ENCODE measurements at regions of chr11 and their contacts with region 1.

Region 1: DNA sequence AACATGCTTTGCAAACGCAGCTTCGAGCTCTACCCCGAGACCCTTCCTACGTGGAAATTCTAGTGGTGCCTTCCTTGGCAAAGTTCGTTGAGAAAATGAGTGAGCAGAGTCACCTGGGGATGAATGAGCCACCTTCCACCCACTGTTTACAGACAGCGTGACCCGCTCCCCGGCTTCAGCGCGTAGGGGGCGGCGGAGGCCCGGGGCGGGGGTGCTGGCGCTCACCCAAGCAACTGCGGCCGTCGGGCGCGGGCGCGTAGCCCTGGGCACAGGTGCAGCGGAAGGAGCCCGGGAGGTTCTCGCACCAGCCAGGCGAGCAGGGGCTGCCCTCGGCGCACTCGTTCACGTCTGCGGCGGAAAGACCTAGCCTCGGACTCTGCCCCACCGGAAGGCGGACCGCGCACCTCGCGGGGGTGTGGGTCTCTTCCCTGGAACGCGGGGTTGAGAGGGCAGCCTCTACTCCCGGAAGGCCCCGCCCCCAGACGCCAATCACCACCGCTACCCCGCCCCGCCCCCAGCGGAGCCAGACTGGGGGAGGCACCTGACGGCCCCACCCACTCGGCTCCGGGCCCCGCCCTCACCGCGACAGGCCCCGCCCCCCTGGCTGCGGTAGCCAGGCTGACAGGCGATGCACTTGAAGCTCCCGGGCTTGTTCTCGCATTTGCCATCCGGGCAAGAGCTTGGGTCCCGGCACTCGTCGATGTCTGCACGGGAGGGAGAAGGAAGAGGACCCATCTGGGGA is 11.8 kb downstream of the LTBP3 start:
- DNase-seq: peak; percentile 95 to 100 (median 98)
- ATAC-seq: peak; percentile 96
- H3K4me3 ChIP-seq: peak overlapping the region; percentile 14
- H3K4me3 Mint-ChIP-seq: peak overlapping the region; percentile 39 to 86 (median 84)
- H3K27ac ChIP-seq: peak overlapping the region; percentile 75
- H3K27ac Mint-ChIP-seq: peak overlapping the region; percentile 86 to 98 (median 88)
- H3K4me1 ChIP-seq: peaks cover 27 to 41% of the 10 kb centered on the region in 2 donors
- H3K4me1 Mint-ChIP-seq: peaks cover 40 to 73% (median 54%) of the 10 kb centered on the region in 7 donors
- H3K27me3 ChIP-seq: no peaks in the 10 kb centered on the region
- H3K27me3 Mint-ChIP-seq: no peaks in the 10 kb centered on the region

Region 2: DNA sequence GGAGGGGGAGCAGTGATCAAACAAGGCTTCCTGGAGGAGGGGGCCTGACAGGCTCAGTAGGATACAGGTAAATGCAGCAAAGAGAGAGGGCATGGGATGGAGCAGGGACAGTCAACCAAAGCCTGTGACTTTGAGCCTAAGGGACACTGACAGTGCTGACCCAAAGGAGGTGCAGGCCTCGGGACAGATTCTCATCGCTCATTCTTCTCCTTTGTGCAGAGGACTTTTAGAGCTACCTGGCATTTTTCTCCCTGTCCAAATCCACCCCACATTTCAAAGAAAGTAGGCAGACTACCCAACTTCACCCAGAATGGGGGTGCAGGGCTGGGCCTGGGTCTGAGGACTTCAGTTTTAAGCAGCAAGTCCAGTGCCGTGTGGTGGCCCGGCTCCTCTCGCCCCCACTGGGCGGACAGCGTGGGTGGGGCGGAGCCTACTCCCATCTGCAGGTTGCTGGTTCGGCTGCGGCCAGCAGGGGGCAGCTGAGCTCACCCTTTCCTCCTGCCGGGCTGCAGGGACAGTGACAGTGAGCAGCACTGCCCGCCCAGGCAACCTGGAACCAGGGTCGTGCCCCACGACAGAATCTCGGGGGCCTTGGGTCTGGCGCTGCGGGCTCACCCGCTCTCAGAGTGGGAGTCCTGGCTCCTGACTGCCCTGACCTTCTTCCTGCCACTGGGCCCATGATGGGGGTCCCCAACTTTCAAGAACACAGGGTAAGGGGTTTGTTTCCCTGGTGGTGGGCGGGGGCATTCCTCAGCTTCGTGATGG is 130.1 kb before region 1 on chr11:
- CTCF ChIA-PET with region 1: no interaction called
- POLR2A ChIA-PET with region 1: no interaction called
- intact Hi-C with region 1: no loop called
- DNase-seq: peak; percentile 82 to 94 (median 88)
- ATAC-seq: peak; percentile 72
- H3K4me3 ChIP-seq: peak overlapping the region; percentile 82
- H3K4me3 Mint-ChIP-seq: peak overlapping the region; percentile 92 to 100 (median 97)
- H3K27ac ChIP-seq: peak overlapping the region; percentile 98
- H3K27ac Mint-ChIP-seq: peak overlapping the region; percentile 98 to 100 (median 99)
- H3K4me1 ChIP-seq: peaks cover 36 to 46% of the 10 kb centered on the region in 2 donors
- H3K4me1 Mint-ChIP-seq: peaks cover 36 to 49% (median 44%) of the 10 kb centered on the region in 7 donors
- H3K27me3 ChIP-seq: no peaks in the 10 kb centered on the region
- H3K27me3 Mint-ChIP-seq: no peaks in the 10 kb centered on the region

Region 3: DNA sequence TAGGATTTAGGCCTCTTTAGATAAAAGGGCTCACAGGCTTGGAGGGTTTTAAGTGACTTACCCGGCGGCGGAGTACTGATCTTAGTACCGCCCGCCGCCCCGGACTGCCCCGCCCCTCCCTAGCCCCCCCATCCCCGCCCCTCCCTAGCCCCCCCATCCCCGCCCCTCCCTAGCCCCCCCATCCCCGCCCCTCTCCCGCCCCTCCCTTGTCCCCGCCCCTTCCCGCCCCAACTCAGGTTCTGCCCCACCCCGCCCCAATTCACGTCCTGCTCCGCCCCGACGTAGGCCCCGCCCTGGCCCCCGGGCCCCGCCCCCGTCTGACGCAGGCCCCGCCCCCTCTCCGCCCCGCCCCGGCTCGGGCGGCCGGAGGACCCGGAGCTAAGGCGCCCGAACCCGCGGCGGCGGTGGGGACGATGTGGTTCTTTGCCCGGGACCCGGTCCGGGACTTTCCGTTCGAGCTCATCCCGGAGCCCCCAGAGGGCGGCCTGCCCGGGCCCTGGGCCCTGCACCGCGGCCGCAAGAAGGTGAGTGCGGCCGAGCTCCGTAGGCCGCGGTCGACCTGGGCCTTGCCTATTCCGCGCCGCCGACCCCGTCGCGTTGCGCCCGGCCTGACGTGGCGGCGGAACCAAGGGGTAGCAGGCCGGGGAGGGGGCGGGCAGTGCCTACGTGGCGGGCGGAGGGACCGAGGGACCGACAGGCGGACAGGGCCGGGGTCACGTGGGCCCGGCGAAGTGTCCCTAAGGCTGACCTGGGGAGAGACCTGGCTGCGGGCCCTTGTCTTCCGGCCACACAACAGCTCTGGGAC is 21.4 kb before region 1 on chr11 and contains the start of gene SCYL1:
- CTCF ChIA-PET with region 1: interaction called, 3 read pairs
- POLR2A ChIA-PET with region 1: interaction called, 48 read pairs
- intact Hi-C with region 1: no loop called
- DNase-seq: peak; percentile 58 to 86 (median 77)
- ATAC-seq: peak; percentile 97
- H3K4me3 ChIP-seq: peak within 1 kb of the TSS; percentile 79
- H3K4me3 Mint-ChIP-seq: peak within 1 kb of the TSS; percentile 86 to 96 (median 90)
- H3K27ac ChIP-seq: peak within 1 kb of the TSS; percentile 96
- H3K27ac Mint-ChIP-seq: peak within 1 kb of the TSS; percentile 89 to 98 (median 95)
- H3K4me1 ChIP-seq: peaks cover 31 to 40% of the 10 kb centered on the region in 2 donors
- H3K4me1 Mint-ChIP-seq: peaks cover 32 to 66% (median 54%) of the 10 kb centered on the region in 7 donors
- H3K27me3 ChIP-seq: no peaks in the 10 kb centered on the region
- H3K27me3 Mint-ChIP-seq: no peaks in the 10 kb centered on the region
- total RNA-seq, gene SCYL1: 63.2 to 79.8 (median 70.4) TPM

Region 4: GRCh38 chr11:65558002-65558931 is 11.9 kb after region 1 on chr11 and contains the start of gene LTBP3:
- CTCF ChIA-PET with region 1: interaction called, 32 read pairs
- POLR2A ChIA-PET with region 1: interaction called, 186 read pairs
- intact Hi-C with region 1: loop called in 1 of 2 experiments (anchors 1 kb)
- DNase-seq: peak in 2 of 9 donors; percentile 57 to 58
- ATAC-seq: peak; percentile 43
- H3K4me3 ChIP-seq: peak within 1 kb of the TSS; percentile 53
- H3K4me3 Mint-ChIP-seq: peak within 1 kb of the TSS; percentile 89 to 98 (median 94)
- H3K27ac ChIP-seq: peak within 1 kb of the TSS; percentile 89
- H3K27ac Mint-ChIP-seq: peak within 1 kb of the TSS; percentile 84 to 97 (median 92)
- H3K4me1 ChIP-seq: peaks cover 20 to 58% of the 10 kb centered on the region in 2 donors
- H3K4me1 Mint-ChIP-seq: peaks cover 46 to 73% (median 59%) of the 10 kb centered on the region in 7 donors
- H3K27me3 ChIP-seq: no peaks in the 10 kb centered on the region
- H3K27me3 Mint-ChIP-seq: no peaks in the 10 kb centered on the region
- total RNA-seq, gene LTBP3: 91.4 to 288 (median 280) TPM

Region 5: DNA sequence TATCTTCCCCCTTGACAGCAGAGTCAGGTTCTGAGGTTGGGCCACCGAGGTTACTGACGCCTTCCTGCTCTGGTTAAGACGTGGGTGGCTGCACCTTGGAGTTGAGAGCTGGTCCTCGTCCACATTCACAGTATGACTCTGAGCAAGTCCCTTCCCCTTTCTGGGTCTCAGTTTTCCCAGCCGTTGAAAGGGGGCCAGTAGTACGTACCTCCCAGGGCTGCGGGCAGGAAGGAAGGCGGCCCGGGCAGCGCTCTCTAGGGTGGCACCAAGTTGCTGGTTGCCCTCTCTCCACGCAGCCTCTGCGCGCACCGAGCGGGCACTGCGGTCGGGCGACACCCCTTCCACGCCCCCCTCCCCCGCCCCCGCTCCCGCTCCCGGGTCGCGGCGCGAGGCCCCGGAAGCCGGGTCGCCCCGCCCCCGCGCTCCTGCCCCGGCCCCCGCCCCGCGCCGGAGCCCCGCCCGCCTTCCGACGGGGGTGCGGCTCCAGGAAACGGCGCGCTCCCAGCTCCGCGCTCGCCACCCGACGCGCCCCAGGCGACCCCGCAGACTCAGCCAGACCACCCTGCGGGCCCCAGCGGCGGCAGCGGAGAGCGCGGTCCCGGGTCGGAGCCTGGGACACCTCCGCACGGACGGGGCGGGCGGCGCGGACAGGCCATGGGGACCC is 29.3 kb after region 1 on chr11 and contains the start of gene EHBP1L1:
- CTCF ChIA-PET with region 1: interaction called, 57 read pairs
- POLR2A ChIA-PET with region 1: interaction called, 90 read pairs
- intact Hi-C with region 1: loop called (anchors 1 kb)
- DNase-seq: peak; percentile 72 to 87 (median 81)
- ATAC-seq: peak; percentile 49
- H3K4me3 ChIP-seq: peak within 1 kb of the TSS; percentile 82
- H3K4me3 Mint-ChIP-seq: peak within 1 kb of the TSS; percentile 91 to 100 (median 93)
- H3K27ac ChIP-seq: peak within 1 kb of the TSS; percentile 96
- H3K27ac Mint-ChIP-seq: peak within 1 kb of the TSS; percentile 89 to 98 (median 95)
- H3K4me1 ChIP-seq: peaks cover 47 to 48% of the 10 kb centered on the region in 2 donors
- H3K4me1 Mint-ChIP-seq: peaks cover 30 to 59% (median 47%) of the 10 kb centered on the region in 7 donors
- H3K27me3 ChIP-seq: no peaks in the 10 kb centered on the region
- H3K27me3 Mint-ChIP-seq: no peaks in the 10 kb centered on the region
- total RNA-seq, gene EHBP1L1: 108 to 207 (median 128) TPM

Measured in naive thymus-derived CD4-positive, alpha-beta T cell (primary cell).